Uterus (tissue), 4 donors: ENCODE measurements at regions of chr1 and their contacts with region 1.

Region 1: DNA sequence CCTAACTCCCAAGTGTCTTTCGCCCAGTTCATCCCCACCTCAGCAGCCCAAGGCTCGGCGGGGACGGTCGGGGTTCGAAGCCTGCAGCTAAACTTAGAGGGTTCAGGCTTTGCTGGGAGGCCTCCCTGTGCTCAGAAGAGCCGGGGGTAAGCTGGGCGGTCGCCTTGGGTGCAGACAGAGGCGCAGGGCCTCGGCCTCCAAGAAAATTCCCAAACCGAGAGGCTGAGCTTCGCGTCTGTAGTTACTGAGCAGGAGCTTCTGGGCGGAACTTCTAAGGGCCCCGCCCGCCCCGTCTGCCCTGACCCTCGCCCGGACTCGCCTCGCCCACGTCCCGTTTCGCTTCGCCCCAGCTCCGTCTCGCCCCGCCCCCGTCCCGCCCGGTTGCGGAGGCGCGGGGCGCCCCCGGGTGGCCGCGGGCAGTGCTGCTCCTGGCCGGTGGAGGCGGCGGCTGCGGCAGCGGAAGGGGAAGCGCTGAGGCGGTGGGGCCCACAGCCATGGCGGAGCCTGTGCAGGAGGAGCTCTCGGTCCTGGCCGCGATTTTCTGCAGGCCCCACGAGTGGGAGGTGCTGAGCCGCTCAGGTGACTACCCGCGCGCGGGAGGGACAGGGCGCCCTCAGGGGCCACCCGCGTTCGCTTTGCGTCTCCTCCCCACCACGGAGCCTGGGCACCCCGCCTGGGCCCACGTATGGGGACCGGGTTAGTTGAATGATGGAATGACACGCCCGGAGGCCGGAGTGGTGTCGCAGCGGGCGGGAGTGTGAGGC is at the start of gene RWDD3:
- DNase-seq: peak; percentile 94 to 95
- H3K4me3 ChIP-seq: peak within 1 kb of the TSS; percentile 62 to 89
- H3K27ac ChIP-seq: peak within 1 kb of the TSS; percentile 87 to 88
- H3K4me1 ChIP-seq: peaks cover 0 to 8% of the 10 kb centered on the region in 2 donors
- H3K27me3 ChIP-seq: no peaks in the 10 kb centered on the region
- CTCF ChIP-seq: peak; percentile 57 to 98 (median 96)
- POLR2A ChIP-seq: peak; percentile 33 to 70
- total RNA-seq, gene RWDD3: 4.1 to 36.6 (median 30.8) TPM

Region 2: DNA sequence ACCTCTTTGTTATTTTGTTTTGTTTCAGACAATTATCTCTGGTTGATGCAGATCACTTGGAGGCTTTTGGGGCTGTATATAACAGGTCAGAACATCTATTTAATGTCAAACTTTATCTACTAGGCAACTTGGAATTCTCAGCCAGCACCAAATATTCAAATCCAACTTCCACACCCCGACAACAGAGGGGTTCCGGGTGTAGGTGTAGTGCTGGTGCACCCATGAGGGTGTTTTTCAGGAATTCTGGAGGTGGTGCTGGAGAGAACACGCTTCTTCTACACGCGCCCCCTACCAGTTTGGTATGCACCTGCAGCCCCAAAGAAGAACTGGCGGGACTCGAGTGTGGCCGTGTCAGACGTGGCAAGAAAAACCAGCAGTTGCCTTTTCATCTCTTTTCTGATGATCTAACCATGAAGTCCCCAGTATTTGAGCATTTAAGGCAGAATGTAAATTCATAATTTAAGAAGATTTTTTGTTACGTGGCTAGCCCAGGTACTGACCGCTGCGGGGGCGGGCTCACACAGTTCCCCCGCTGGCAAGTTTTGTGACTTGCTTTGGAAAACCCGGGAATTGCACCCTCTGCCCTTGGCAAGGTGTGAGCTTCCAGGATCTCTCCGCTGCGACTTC is 117.2 kb before region 1 on chr1:
- intact Hi-C with region 1: loop called (anchors 5 kb)
- DNase-seq: peak; percentile 58 to 64
- H3K4me3 ChIP-seq: peak overlapping the region; percentile 44 to 84
- H3K27ac ChIP-seq: peak overlapping the region; percentile 36 to 83
- H3K4me1 ChIP-seq: no peaks in the 10 kb centered on the region
- H3K27me3 ChIP-seq: no peaks in the 10 kb centered on the region
- CTCF ChIP-seq: peak; percentile 51 to 78 (median 58)
- POLR2A ChIP-seq: no peak